Prostate gland (tissue), 2 donors: ENCODE measurements at regions of chr9 and their contacts with region 1.

Region 1: GRCh38 chr9:69549310-69550202 is 122.6 kb downstream of the APBA1 start:
- DNase-seq: peak; percentile 23
- H3K4me3 ChIP-seq: no peak overlapping the region
- H3K27ac ChIP-seq: no peak overlapping the region
- H3K4me1 ChIP-seq: no peaks in the 10 kb centered on the region
- H3K27me3 ChIP-seq: no peaks in the 10 kb centered on the region
- CTCF ChIP-seq: peak; percentile 50 to 81 (median 76)
- POLR2A ChIP-seq: no peak

Region 2: GRCh38 chr9:69027355-69028096 is 522.0 kb before region 1 on chr9:
- intact Hi-C with region 1: loop called (anchors 5 kb)
- DNase-seq: peak; percentile 23
- H3K4me3 ChIP-seq: no peak overlapping the region
- H3K27ac ChIP-seq: no peak overlapping the region
- H3K4me1 ChIP-seq: no peaks in the 10 kb centered on the region
- H3K27me3 ChIP-seq: no peaks in the 10 kb centered on the region
- CTCF ChIP-seq: peak; percentile 23 to 65 (median 62)
- POLR2A ChIP-seq: no peak

Region 3: DNA sequence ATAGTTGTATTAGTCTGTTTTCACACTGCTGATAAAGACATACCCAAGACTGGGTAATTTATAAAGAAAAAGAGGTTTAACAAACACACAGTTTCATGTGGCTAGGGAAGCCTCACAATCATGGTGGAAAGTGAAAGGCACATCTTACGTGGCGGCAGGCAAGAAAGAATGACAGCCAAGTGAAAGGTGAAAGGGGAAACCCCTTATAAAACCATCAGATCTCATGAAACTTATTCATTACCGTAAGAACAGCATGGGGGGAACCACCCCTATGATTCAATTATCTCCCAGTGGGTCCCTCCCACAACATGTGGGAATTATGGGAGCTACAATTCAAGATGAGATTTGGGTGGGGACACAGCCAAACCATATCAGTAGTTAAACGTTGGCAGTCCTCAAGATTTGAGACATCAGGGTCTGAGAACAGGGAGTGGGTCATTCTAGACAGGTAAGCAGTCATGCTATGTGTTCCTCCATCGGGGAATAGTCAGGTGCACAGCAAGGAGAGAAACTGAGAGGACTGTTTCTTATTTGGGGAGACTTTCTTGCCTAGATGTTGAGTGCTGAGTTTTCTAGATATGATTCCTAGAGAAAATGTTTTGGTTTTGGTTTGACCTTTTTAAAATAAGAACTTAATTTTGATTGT is 270.3 kb before region 1 on chr9:
- intact Hi-C with region 1: no loop called
- DNase-seq: no peak
- H3K4me3 ChIP-seq: no peak overlapping the region
- H3K27ac ChIP-seq: no peak overlapping the region
- H3K4me1 ChIP-seq: no peaks in the 10 kb centered on the region
- H3K27me3 ChIP-seq: no peaks in the 10 kb centered on the region
- CTCF ChIP-seq: no peak
- POLR2A ChIP-seq: no peak

Region 4: GRCh38 chr9:69622676-69623075 is 73.1 kb after region 1 on chr9:
- intact Hi-C with region 1: no loop called
- DNase-seq: no peak
- H3K4me3 ChIP-seq: no peak overlapping the region
- H3K27ac ChIP-seq: no peak overlapping the region
- H3K4me1 ChIP-seq: no peaks in the 10 kb centered on the region
- H3K27me3 ChIP-seq: no peaks in the 10 kb centered on the region
- CTCF ChIP-seq: no peak
- POLR2A ChIP-seq: no peak

Region 5: GRCh38 chr9:69771775-69772418 is 222.3 kb after region 1 on chr9:
- intact Hi-C with region 1: no loop called
- DNase-seq: no peak
- H3K4me3 ChIP-seq: no peak overlapping the region
- H3K27ac ChIP-seq: no peak overlapping the region
- H3K4me1 ChIP-seq: no peaks in the 10 kb centered on the region
- H3K27me3 ChIP-seq: no peaks in the 10 kb centered on the region
- CTCF ChIP-seq: no peak
- POLR2A ChIP-seq: no peak